BJ (cell line): ENCODE measurements at regions of chr7 and their contacts with region 1.

Region 1: DNA sequence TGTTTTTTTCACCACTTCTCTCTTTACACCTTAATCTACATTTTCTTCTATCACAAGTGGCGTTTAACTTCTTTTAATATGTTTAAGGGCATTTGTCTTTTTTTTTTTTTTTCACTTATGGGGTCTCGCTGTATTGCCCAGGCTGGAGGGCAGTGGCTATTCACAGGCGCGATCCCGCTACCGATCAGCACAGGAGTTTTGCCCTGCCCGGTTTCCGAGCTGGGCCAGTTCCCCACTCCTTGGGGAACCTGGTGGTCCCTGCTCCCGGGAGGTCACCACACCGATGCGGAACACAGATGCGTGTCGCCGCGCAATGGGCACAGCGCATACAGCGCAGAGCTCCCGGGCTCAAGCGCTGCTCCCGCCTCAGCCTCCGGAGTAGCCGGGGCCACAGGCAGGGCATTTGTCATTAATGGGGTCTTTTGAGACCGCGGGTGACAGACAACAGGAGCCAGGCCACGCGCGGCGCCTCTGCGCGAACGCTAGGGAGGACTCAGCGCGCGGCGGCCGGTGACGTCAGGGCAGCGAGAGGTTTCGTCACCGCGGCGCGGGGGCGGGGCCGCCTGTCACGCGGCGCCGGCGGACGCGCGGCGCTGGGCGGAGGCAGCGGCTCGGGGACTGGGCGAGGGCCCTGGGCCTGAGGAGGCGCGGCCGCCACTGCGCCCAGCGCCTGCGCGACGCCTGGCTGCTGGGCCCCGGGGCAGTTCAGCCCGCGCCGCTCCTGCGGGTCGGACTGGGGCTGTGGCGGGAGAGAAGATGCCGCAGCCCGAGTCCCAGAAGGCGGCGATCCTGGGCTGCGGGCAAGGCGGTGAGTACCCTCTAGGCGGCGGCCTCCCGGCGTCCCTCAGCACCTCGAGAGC is at the start of gene GALNT11:
- DNase-seq: peak; percentile 20
- H3K4me3 ChIP-seq: peak within 1 kb of the TSS; percentile 73
- H3K27me3 ChIP-seq: no peaks in the 10 kb centered on the region
- CTCF ChIP-seq: no peak
- polyA plus RNA-seq, gene GALNT11: 18.7 and 28.8 TPM in 2 replicates

Region 2: DNA sequence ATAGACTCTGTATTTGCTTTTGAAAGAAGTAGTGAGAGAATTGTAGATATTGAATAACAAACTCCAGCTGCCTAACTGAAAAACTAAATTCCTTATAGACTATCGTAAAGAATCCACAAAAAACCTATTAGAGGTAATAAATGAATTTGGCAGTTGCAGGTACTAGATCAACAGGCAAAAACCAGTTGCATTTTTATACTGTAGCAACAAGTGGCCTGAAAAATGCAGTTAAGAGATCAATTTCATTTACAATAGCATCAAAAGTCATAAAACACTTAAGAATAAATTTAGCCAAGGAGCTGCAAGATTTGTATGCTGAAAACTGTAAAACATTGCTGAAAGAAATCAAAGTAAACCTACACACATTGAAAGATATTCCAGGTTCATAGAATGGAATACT is 70.5 kb after region 1 on chr7:
- CTCF ChIA-PET with region 1: no interaction called
- POLR2A ChIA-PET with region 1: interaction called, 21 read pairs
- DNase-seq: no peak
- H3K4me3 ChIP-seq: no peak overlapping the region
- H3K27me3 ChIP-seq: no peaks in the 10 kb centered on the region
- CTCF ChIP-seq: no peak

Region 3: GRCh38 chr7:152436111-152436930 is 411.0 kb after region 1 on chr7:
- CTCF ChIA-PET with region 1: no interaction called
- POLR2A ChIA-PET with region 1: interaction called, 10 read pairs
- DNase-seq: peak; percentile 18
- H3K4me3 ChIP-seq: peak overlapping the region; percentile 80
- H3K27me3 ChIP-seq: no peaks in the 10 kb centered on the region
- CTCF ChIP-seq: no peak